Activated T-helper 1 cell treated with anti-CD3 and anti-CD28 coated beads, Interleukin-12 subunit alpha, Interleukin-12 subunit beta, Interleukin-2, Interleukin-4 antibody, amounts not matched to agents 30 ng/mL and 10 ng/mL and 1 ng/mL, durations not matched to agents 14 hours and 24 hours and 36 hours (primary cell): ENCODE measurements at regions of chr13 and their contacts with region 1.

Region 1: DNA sequence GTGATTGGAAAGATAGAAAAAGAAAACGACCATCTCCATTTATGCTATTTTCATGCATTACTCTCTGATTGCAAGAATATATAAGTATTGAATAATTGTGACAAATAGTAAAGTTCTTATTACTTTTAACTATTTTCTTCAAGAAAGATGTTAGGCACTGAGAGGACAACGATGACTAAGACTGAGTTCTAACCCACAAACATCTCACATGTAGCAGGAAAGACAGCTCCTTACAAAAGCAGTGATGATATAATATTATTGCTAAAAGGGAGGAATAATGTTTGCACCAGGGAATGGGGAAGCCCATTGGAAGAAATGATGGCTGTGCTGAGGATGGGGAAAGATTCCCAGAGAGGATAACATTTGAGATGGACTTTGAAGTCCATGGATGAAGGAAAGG is 22.6 kb downstream of the RXFP2 start:
- DNase-seq: no peak
- H3K4me3 Mint-ChIP-seq: no peak overlapping the region
- H3K27ac Mint-ChIP-seq: no peak overlapping the region
- H3K4me1 Mint-ChIP-seq: no peaks in the 10 kb centered on the region
- H3K27me3 Mint-ChIP-seq: no peaks in the 10 kb centered on the region

Region 2: GRCh38 chr13:31424117-31424729 is 337.7 kb before region 1 on chr13:
- intact Hi-C with region 1: no loop called
- DNase-seq: peak; percentile 20
- H3K4me3 Mint-ChIP-seq: no peak overlapping the region
- H3K27ac Mint-ChIP-seq: no peak overlapping the region
- H3K4me1 Mint-ChIP-seq: no peaks in the 10 kb centered on the region
- H3K27me3 Mint-ChIP-seq: no peaks in the 10 kb centered on the region

Region 3: DNA sequence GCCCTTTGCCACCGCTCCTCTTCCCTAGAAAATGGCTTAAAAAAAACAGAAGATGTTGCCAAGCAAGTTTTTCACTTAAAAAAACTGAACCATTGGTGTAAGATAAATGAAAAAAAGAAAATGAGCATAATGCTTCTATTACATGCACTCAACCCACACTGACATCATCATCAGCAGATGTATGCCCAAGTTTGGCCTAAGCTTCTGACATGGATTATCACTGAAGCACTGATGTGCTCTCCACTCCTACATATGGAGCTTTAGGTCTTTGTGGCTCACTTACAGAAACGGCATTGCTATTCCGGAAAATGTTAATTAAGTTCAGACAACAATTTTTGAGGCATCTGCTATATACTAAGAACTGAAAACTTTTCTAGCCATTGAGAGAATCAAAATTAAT is 14.7 kb before region 1 on chr13:
- intact Hi-C with region 1: loop called (anchors 2 kb)
- DNase-seq: no peak
- H3K4me3 Mint-ChIP-seq: no peak overlapping the region
- H3K27ac Mint-ChIP-seq: no peak overlapping the region
- H3K4me1 Mint-ChIP-seq: peaks cover 2% of the 10 kb centered on the region
- H3K27me3 Mint-ChIP-seq: peaks cover 8% of the 10 kb centered on the region

Region 4: DNA sequence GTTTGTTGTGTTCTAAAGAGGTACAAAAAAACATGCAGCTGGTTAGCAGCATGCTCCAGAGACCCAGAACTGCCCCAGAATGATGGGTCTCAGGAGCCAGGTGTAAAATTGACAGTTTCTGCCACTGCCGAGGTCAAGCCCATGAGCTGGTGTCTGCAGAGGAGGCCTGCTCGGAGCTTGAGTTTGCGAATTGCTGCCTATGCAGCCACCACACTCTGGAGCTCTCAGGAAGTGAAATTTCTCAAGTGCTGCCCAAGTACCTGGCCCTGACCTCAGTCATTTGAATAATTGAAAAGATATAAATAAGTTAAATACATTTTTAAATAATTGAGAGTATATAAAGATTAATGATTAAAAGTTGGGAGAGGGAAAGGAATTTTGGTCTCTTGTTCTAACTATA is 486.9 kb after region 1 on chr13:
- intact Hi-C with region 1: no loop called
- DNase-seq: no peak
- H3K4me3 Mint-ChIP-seq: no peak overlapping the region
- H3K27ac Mint-ChIP-seq: no peak overlapping the region
- H3K4me1 Mint-ChIP-seq: no peaks in the 10 kb centered on the region
- H3K27me3 Mint-ChIP-seq: no peaks in the 10 kb centered on the region